ENCODE measurements at regions of chr10 and their contacts with region 1.

Region 1: DNA sequence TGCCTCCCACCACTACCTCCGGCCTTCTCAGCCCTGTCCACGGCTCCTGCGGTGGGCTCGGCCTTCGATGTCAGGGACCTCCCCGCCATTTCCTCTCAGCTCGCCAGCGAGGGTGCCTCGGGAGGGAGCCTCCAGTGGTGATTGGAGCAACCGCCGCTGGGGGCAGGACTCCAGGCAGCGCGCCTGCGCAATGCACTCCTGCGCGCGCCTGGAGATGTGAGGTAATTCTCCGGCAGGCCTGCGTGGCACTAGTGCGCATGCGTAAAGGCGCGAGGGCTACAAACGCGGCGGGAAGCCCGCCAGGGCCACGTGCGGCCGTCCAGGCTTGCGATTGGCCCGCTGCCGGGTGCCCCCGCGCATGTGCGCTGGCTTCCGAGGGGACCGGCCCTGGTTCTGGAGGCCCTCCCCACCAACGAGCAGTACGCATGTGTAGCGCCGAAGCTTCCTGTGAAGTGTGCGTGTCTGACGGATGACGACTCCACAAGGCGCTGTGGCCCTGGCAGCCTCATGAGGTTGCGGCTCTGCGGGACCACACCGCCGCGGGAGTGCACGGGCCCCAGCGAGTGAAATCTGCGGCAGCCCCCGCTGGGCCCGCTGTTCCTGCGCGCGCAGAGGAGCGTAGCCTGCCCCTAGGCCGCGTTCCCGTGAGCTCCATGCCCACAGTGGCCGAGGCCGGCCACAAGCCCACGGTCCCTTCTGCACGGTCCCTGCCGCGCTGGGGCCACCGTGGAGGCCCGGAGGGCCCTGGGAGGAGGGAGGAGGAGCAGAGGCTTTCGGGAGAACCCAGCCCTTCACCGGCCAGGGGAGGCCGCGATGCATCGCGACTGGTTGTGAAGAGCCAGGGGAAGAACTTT is at the start of gene SYCE1:
- DNase-seq: peak in 4 of 10 donors; percentile 10 to 54 (median 30)
- H3K4me3 ChIP-seq: peak within 1 kb of the TSS in 25 of 59 donors; percentile 2 to 55 (median 36)
- H3K27ac ChIP-seq: peak within 1 kb of the TSS in 1 of 59 donors; percentile 43
- H3K27me3 ChIP-seq: peaks cover 0 to 18% (median 0%) of the 10 kb centered on the region in 45 donors
- CTCF ChIP-seq: peak in 3 of 56 donors; percentile 16 to 24 (median 17)
- total RNA-seq, gene SYCE1: 5.6 to 42.2 (median 18.8) TPM

Region 2: GRCh38 chr10:133100706-133101415 is 464.8 kb before region 1 on chr10:
- intact Hi-C with region 1: no loop called
- DNase-seq: peak in 3 of 10 donors; percentile 59 to 91 (median 67)
- H3K4me3 ChIP-seq: no peak overlapping the region
- H3K27ac ChIP-seq: peak overlapping the region in 19 of 59 donors; percentile 6 to 57 (median 30)
- H3K27me3 ChIP-seq: peaks cover 0 to 4% (median 0%) of the 10 kb centered on the region in 45 donors
- CTCF ChIP-seq: no peak

Region 3: DNA sequence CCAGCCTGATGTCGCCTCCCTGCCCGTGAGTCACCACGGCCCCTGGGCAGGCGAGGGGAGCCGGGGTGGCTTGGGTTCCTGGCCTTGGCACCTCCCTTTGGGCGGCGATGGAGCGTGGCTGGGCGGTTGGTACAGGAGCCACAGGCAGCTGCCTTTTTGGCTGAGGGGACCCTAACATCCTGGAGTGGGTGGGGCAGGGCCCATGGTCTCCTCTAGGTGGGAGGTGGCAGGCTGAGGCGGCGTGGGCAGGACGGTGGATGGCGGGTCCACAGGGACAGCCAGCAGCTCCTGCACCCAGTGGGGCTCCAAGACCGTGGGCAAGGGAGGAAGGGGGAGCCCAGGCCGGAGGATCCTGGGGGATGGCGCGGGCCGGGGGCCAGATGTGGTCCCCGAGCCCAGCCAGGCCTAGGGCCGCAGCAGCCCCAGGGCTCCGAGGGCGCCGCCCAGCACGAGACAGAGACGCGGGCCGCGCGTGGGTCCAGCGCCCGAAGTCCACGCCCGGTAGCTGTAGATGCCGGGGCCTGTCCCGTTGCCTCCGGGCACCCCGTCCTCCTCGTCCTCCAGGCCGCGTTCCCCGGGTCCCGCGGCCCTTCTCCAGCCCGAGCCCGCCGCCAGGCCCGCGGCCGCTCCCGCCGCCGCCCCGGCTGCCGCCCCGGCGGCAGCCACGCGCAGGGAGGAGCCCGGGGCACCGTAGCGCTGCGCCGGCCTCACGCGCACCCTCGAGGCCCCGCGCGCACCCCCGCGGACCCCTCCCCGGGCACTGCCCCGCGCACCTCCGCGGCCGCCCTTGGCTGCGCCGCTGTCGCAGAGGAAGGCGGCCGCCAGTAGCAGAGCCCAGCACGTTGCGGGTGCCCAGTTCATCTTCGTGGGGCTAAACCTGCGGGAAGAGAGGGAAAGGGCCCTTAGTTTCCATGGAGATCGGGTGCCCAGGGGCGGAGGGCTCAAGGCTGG is 142.6 kb before region 1 on chr10:
- intact Hi-C with region 1: loop called in 1 of 2 experiments (anchors 10 kb)
- DNase-seq: peak in 2 of 10 donors; percentile 41
- H3K4me3 ChIP-seq: peak overlapping the region in 43 of 59 donors; percentile 5 to 56 (median 34)
- H3K27ac ChIP-seq: peak overlapping the region in 14 of 59 donors; percentile 6 to 69 (median 40)
- H3K27me3 ChIP-seq: peaks cover 0 to 8% (median 0%) of the 10 kb centered on the region in 45 donors
- CTCF ChIP-seq: no peak